OCI-LY7 (cell line): ENCODE measurements at regions of chr18 and their contacts with region 1.

Region 1: DNA sequence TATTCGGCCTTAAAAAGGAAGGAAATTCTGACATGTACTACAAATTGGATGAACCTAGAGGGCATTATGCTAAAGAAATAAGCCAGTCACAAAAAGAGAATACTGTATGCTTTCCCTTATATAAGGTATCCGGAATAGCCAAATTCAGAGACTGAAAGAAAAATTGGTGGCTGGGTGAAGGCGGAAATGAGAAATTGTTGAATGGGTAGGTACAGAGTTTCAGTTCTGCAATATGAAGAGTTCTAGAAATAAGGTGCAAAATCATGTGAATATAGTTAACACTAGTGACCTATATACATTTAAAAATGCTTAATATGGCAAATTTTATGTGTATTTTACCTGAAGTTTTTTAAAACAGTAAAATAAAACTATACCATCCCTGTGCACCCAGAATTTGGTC is 43.1 kb downstream of the RMP24 start:
- DNase-seq: peak; percentile 58
- H3K4me3 ChIP-seq: no peak overlapping the region
- H3K27ac ChIP-seq: peak overlapping the region; percentile 6
- H3K4me1 ChIP-seq: peaks cover 20% of the 10 kb centered on the region
- CTCF ChIP-seq: no peak

Region 2: GRCh38 chr18:36067055-36067957 is 51.7 kb after region 1 on chr18 and contains the start of gene RPRD1A:
- CTCF ChIA-PET with region 1: no interaction called
- POLR2A ChIA-PET with region 1: no interaction called
- intact Hi-C with region 1: loop called (anchors 5 kb)
- DNase-seq: peak; percentile 88
- H3K4me3 ChIP-seq: peak within 1 kb of the TSS; percentile 87
- H3K27ac ChIP-seq: peak within 1 kb of the TSS; percentile 50
- H3K4me1 ChIP-seq: peaks cover 4% of the 10 kb centered on the region
- CTCF ChIP-seq: no peak
- total RNA-seq, gene RPRD1A: 45.4 and 51.6 TPM in 2 replicates

Region 3: DNA sequence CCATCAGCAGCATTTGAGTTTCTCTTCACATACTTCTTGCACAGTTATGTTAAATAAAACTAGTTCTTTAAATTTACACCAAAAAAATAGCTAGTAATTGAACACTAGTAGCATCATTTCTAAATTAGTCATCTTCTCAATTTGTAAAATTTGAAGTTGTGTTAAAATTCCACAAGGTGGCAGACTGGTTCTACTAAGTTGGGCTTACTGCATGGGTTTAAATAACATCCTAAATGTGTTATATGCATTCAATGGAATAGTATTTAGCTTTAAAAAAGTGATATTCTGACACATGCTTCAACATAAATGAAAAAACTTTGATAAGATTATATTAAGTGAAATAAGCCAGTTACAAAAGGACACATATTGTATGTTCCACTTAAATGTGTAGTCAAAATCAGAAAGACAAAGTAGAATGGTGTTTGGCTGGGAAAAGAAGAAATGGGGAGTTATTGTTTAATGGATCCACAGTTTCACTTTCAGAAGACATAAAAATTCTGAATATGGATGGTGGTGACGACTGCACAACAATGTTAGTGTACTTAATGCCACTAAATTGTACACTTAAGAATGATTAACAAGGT is 80.4 kb after region 1 on chr18:
- CTCF ChIA-PET with region 1: no interaction called
- POLR2A ChIA-PET with region 1: no interaction called
- intact Hi-C with region 1: loop called (anchors 5 kb)
- DNase-seq: peak; percentile 58
- H3K4me3 ChIP-seq: no peak overlapping the region
- H3K27ac ChIP-seq: no peak overlapping the region
- H3K4me1 ChIP-seq: no peaks in the 10 kb centered on the region
- CTCF ChIP-seq: peak; percentile 78

Region 4: GRCh38 chr18:36284671-36285295 is 269.2 kb after region 1 on chr18:
- CTCF ChIA-PET with region 1: no interaction called
- POLR2A ChIA-PET with region 1: no interaction called
- intact Hi-C with region 1: loop called (anchors 5 kb)
- DNase-seq: peak; percentile 52
- H3K4me3 ChIP-seq: no peak overlapping the region
- H3K27ac ChIP-seq: no peak overlapping the region
- H3K4me1 ChIP-seq: no peaks in the 10 kb centered on the region
- CTCF ChIP-seq: peak; percentile 81

Region 5: GRCh38 chr18:36977121-36977520 is 961.5 kb after region 1 on chr18:
- CTCF ChIA-PET with region 1: no interaction called
- POLR2A ChIA-PET with region 1: no interaction called
- intact Hi-C with region 1: no loop called
- DNase-seq: no peak
- H3K4me3 ChIP-seq: no peak overlapping the region
- H3K27ac ChIP-seq: no peak overlapping the region
- H3K4me1 ChIP-seq: no peaks in the 10 kb centered on the region
- CTCF ChIP-seq: no peak